ENCODE measurements at regions of chr10 and their contacts with region 1.

Region 1: GRCh38 chr10:101095542-101096213 is 33.9 kb downstream of the KAZALD1 start:
- DNase-seq: peak; percentile 46 to 69 (median 52)
- H3K4me3 ChIP-seq: no peak overlapping the region
- H3K4me3 Mint-ChIP-seq: no peak overlapping the region
- H3K27ac ChIP-seq: no peak overlapping the region
- H3K27ac Mint-ChIP-seq: no peak overlapping the region
- H3K4me1 ChIP-seq: no peaks in the 10 kb centered on the region
- H3K4me1 Mint-ChIP-seq: no peaks in the 10 kb centered on the region
- H3K27me3 ChIP-seq: no peaks in the 10 kb centered on the region
- H3K27me3 Mint-ChIP-seq: peaks cover 38 to 75% of the 10 kb centered on the region in 2 donors

Region 2: DNA sequence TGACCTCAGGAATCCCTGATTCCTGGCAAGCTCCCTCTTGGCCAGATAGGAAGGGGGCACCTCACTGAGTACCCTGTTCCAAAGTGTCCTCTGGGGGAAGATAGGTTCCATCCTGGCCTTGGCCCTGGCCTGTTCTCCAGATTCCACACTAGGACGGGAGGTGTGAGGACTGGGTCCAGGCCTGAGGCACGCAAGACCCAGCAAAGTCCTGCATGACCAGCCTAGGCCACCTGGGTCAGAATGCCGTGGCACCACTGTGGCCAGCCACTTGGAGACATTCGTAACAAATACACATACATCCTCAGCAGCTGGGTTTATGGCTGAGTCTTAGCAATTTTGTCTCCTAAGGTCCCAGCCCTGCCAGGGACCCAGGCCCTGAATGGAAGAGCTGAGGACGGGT is 12.1 kb after region 1 on chr10:
- CTCF ChIA-PET with region 1: interaction called, 21 read pairs
- POLR2A ChIA-PET with region 1: no interaction called
- DNase-seq: no peak
- H3K4me3 ChIP-seq: no peak overlapping the region
- H3K4me3 Mint-ChIP-seq: no peak overlapping the region
- H3K27ac ChIP-seq: no peak overlapping the region
- H3K27ac Mint-ChIP-seq: no peak overlapping the region
- H3K4me1 ChIP-seq: no peaks in the 10 kb centered on the region
- H3K4me1 Mint-ChIP-seq: no peaks in the 10 kb centered on the region
- H3K27me3 ChIP-seq: no peaks in the 10 kb centered on the region
- H3K27me3 Mint-ChIP-seq: peaks cover 19 to 49% of the 10 kb centered on the region in 2 donors

Region 3: GRCh38 chr10:101120884-101121653 is 25.4 kb after region 1 on chr10:
- CTCF ChIA-PET with region 1: interaction called, 16 read pairs
- POLR2A ChIA-PET with region 1: no interaction called
- DNase-seq: peak in 2 of 5 donors; percentile 38 to 60
- H3K4me3 ChIP-seq: peak overlapping the region; percentile 70
- H3K4me3 Mint-ChIP-seq: peak overlapping the region; percentile 88 to 98 (median 95)
- H3K27ac ChIP-seq: no peak overlapping the region
- H3K27ac Mint-ChIP-seq: peak overlapping the region in 6 of 8 donors; percentile 56 to 92 (median 86)
- H3K4me1 ChIP-seq: peaks cover 22% of the 10 kb centered on the region
- H3K4me1 Mint-ChIP-seq: peaks cover 29 to 34% (median 32%) of the 10 kb centered on the region in 3 donors
- H3K27me3 ChIP-seq: peaks cover 38% of the 10 kb centered on the region
- H3K27me3 Mint-ChIP-seq: peaks cover 60% of the 10 kb centered on the region in 2 donors